GM12878 (cell line): ENCODE measurements at regions of chr4 and their contacts with region 1.

Region 1: DNA sequence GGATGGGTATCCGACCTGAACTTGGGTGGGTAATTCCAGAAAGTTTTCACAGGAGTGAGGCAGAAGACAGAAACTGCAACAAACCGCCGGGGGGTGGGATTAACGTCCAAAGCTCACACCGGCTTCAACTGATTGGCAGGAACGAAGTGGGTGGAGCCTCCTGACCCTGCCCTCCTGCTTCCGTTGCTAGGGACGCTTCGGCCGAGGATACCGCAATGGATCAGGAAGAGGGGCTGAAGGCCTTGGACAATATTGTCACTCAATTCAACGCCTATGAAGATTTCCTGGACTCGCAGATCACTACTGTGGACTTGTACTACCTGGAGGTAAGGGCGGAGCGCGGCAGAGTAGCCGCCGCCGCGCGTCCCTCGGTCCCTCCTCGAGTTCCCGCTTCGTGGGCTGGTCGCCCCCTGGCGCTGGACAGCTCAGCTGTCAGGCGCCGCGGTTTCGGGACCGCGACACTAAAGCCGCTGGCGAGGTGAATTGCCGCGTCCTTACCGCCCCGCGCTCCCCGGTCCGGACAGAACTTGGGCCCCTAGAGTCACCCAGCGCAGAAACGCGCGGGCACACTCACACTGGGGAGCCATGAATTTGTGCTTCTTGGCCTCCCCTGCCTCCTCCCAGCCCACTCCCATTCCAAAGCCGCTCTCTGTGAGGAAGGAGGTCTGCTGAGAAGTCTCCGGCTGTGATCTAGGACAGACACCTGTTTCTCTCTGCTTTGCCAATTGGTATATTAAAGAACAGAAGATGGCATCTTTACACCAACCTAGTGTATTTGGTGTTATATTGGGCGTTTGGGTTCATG is at the start of gene CFAP299:
- DNase-seq: peak; percentile 44
- ATAC-seq: peak; percentile 97
- H3K4me3 ChIP-seq: peak within 1 kb of the TSS; percentile 61
- H3K27ac ChIP-seq: no peak within 1 kb of the TSS
- H3K4me1 ChIP-seq: no peaks in the 10 kb centered on the region; the same call in 1 of the 2 replicates
- H3K27me3 ChIP-seq: peaks cover 0 to 8% of the 10 kb centered on the region in 2 experiments; a peak in 3 of 4 replicates
- CTCF ChIP-seq: peak in 2 of 3 experiments; percentile 29 to 36; a peak in 2 of 6 replicates
- EP300 ChIP-seq: no peak
- POLR2A ChIP-seq: no peak
- RAD21 ChIP-seq: no peak
- polyA plus RNA-seq, gene CFAP299: not detected

Region 2: DNA sequence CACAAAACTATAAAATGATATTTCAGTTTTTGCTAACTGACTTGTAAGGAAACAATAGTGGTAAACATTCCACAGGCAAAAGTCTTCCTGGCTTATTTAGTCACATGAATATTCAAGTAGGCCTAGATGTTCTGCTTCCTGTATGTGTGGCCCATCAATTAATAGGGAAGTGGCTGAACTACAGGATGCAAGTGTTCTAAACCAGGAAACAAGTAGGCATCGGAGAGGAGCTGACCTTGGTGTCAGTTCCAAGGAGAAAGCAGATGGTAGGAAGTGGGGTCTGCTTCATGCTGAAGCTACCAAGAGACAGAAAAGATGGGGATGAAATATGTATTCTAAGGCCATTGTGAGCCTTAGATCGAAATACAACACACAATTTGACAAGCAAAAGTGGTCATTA is 412.5 kb before region 1 on chr4:
- CTCF ChIA-PET with region 1: no interaction called
- POLR2A ChIA-PET with region 1: no interaction called
- RAD21 ChIA-PET with region 1: no interaction called
- SMC1A ChIA-PET with region 1: no interaction called
- in situ Hi-C with region 1: no loop called
- intact Hi-C with region 1: loop called (anchors 10 kb)
- DNase-seq: no peak
- ATAC-seq: no peak
- H3K4me3 ChIP-seq: no peak overlapping the region
- H3K27ac ChIP-seq: no peak overlapping the region
- H3K4me1 ChIP-seq: no peaks in the 10 kb centered on the region
- H3K27me3 ChIP-seq: no peaks in the 10 kb centered on the region
- CTCF ChIP-seq: no peak
- EP300 ChIP-seq: no peak
- POLR2A ChIP-seq: no peak
- RAD21 ChIP-seq: no peak

Region 3: DNA sequence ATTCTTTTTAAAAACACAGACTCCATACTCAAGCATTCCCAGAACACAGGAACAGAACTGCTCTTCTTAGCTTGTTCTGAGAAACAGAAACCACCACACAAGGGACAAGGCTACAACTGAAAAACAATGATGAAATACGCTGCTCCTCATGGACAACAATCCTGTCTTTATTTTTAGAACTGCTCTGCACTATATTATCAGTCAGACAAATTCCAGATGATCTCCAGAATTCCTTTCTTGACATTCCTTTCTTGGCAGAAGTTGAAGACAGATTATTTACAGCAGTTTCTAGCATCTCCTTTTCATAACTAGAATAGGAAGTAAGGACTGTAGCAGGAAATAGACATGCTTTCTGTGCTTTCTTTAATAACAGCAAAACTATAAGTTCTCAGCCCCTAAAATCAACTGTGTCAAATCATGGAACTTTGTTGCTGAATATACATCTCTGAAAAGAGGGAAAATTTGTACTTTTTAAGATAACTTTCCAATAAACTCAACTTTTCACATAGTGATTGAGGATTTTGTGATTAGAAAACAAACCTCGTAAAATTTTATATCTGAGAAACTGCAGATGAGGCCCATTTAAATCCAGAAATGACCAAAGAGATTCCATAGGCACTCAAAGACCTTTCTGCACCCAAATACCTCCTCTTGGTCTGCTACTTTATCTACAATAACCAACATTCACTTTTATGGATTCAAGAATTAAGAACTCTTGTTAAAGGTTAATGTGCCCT is 298.6 kb before region 1 on chr4:
- CTCF ChIA-PET with region 1: no interaction called
- POLR2A ChIA-PET with region 1: no interaction called
- RAD21 ChIA-PET with region 1: no interaction called
- SMC1A ChIA-PET with region 1: no interaction called
- in situ Hi-C with region 1: no loop called
- intact Hi-C with region 1: no loop called
- DNase-seq: no peak
- ATAC-seq: no peak
- H3K4me3 ChIP-seq: no peak overlapping the region
- H3K27ac ChIP-seq: no peak overlapping the region
- H3K4me1 ChIP-seq: no peaks in the 10 kb centered on the region
- H3K27me3 ChIP-seq: no peaks in the 10 kb centered on the region
- CTCF ChIP-seq: no peak
- EP300 ChIP-seq: no peak
- POLR2A ChIP-seq: no peak
- RAD21 ChIP-seq: no peak

Region 4: DNA sequence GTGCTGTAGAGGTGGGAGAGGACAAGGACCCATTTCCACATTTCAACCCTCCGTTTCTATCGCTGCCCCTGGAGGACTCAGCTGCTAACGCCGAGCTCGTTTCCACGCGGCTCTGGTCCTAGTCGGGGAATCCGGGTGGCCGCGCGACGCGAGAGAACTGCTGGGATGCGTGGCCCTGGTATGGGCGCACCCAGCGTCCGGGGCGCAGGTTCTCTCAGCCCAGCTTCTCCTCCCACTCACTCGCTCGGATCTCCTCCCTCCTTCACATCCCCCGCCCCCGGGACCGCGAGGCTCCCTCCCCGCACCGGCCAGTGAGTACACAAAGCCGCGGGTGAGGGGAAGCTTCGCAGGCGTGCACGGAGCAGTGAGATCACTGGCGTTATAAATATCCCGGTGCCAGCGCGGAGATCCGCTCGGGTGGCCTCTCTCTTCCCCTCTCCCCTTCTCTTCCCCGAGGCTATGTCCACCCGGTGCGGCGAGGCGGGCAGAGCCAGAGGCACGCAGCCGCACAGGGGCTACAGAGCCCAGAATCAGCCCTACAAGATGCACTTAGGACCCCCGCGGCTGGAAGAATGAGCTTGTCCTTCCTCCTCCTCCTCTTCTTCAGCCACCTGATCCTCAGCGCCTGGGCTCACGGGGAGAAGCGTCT is 69.4 kb before region 1 on chr4 and contains the start of gene FGF5:
- CTCF ChIA-PET with region 1: no interaction called
- POLR2A ChIA-PET with region 1: no interaction called
- RAD21 ChIA-PET with region 1: no interaction called
- SMC1A ChIA-PET with region 1: no interaction called
- in situ Hi-C with region 1: no loop called
- intact Hi-C with region 1: loop called (anchors 5 kb)
- DNase-seq: no peak
- ATAC-seq: peak; percentile 77
- H3K4me3 ChIP-seq: peak within 1 kb of the TSS; percentile 36; the same call in 1 of the 2 replicates
- H3K27ac ChIP-seq: no peak within 1 kb of the TSS
- H3K4me1 ChIP-seq: no peaks in the 10 kb centered on the region
- H3K27me3 ChIP-seq: peaks cover 11 to 36% of the 10 kb centered on the region in 2 experiments
- CTCF ChIP-seq: no peak
- EP300 ChIP-seq: no peak
- POLR2A ChIP-seq: no peak
- RAD21 ChIP-seq: no peak
- polyA plus RNA-seq, gene FGF5: 1.1 to 1.7 TPM

Region 5: DNA sequence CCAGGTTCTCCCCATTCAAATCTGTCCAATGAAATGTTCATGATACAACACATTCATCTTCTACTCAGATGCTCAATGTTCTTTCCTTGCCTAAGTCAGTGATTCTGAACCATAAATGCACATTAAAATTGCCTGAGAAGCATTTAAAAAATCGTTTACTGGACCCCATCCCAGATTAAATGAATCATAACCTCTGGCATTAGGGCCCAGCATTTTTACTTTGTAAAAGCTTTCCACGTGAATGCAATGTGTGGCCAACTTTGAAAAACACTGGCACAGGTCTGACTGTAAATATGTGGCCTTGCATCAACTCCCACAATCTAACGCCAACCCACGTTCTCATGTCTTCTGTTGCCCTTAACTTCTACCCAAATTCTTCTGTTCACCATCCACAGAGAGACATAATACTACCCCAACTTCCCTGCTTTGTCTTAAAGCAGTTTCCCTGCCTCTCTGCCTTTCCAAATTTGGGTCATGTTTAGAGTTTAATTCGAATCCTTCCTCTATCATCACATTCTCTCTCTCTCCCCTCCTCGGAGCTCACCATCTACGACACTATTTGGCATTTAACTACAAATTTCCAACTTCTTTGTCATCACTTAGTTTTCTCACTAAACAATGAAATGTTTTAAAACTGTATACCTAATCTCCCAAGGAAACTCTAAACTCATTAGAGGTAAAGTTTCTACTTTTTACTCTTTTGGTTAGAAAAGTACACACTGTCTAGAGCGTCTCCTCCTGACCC is 800.6 kb after region 1 on chr4:
- CTCF ChIA-PET with region 1: no interaction called
- POLR2A ChIA-PET with region 1: no interaction called
- RAD21 ChIA-PET with region 1: no interaction called
- SMC1A ChIA-PET with region 1: no interaction called
- in situ Hi-C with region 1: no loop called
- intact Hi-C with region 1: no loop called
- DNase-seq: no peak
- ATAC-seq: no peak
- H3K4me3 ChIP-seq: no peak overlapping the region
- H3K27ac ChIP-seq: no peak overlapping the region
- H3K4me1 ChIP-seq: no peaks in the 10 kb centered on the region
- H3K27me3 ChIP-seq: no peaks in the 10 kb centered on the region
- CTCF ChIP-seq: no peak
- EP300 ChIP-seq: no peak
- POLR2A ChIP-seq: no peak
- RAD21 ChIP-seq: no peak